Activated CD4-positive, alpha-beta memory T cell treated with anti-CD3 and anti-CD28 coated beads, Interleukin-2, amount 10 ng/mL, durations not matched to agents 7 days and 5 days (primary cell): ENCODE measurements at regions of chr2 and their contacts with region 1.

Region 1: DNA sequence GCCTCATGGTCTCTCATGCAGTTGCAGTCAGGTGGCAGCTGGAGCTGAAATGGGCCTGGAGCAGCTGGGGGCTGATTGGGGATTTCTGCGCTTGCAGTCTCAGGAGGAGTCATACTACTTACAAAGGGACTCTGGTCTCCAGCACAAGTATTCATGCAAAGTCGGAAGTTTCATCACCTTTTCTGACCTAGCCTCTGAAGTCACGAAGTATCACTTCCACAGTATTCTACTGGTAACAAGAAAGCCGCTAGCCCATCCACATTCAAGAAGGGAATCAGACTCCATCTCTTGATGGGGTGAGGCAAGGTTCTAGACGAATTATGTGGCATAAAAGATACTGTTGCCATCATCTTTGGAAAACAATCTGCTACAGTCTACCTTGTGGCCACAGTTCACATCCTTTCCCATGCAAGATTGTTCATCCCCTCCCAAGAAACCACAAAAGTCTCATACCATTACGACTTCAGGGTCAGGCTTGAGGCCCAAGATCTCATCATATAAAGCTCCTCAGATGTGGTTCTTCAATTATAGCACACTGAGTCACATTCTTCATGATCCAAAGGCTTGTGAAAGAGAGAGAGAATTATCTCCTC is 95.3 kb downstream of the SMC6 start:
- DNase-seq: no peak
- H3K4me3 Mint-ChIP-seq: no peak overlapping the region
- H3K27ac Mint-ChIP-seq: no peak overlapping the region
- H3K4me1 Mint-ChIP-seq: peaks cover 19% of the 10 kb centered on the region
- H3K27me3 Mint-ChIP-seq: no peaks in the 10 kb centered on the region

Region 2: GRCh38 chr2:17646081-17646554 is 12.2 kb before region 1 on chr2:
- CTCF ChIA-PET with region 1: interaction called, 17 read pairs
- POLR2A ChIA-PET with region 1: interaction called, 3 read pairs
- DNase-seq: peak; percentile 42
- H3K4me3 Mint-ChIP-seq: no peak overlapping the region
- H3K27ac Mint-ChIP-seq: no peak overlapping the region
- H3K4me1 Mint-ChIP-seq: peaks cover 8% of the 10 kb centered on the region
- H3K27me3 Mint-ChIP-seq: no peaks in the 10 kb centered on the region